ENCODE measurements at regions of chr7 and their contacts with region 1.

Region 1: GRCh38 chr7:876167-876967 is at the start of gene GET4:
- DNase-seq: peak; percentile 91
- CTCF ChIP-seq: peak; percentile 21

Region 2: GRCh38 chr7:786472-787255 is 89.7 kb before region 1 on chr7:
- CTCF ChIA-PET with region 1: interaction called, 121 read pairs
- POLR2A ChIA-PET with region 1: no interaction called
- DNase-seq: peak; percentile 88
- CTCF ChIP-seq: peak; percentile 78

Region 3: GRCh38 chr7:836411-837400 is 39.7 kb before region 1 on chr7:
- CTCF ChIA-PET with region 1: interaction called, 17 read pairs
- POLR2A ChIA-PET with region 1: no interaction called
- DNase-seq: no peak
- CTCF ChIP-seq: peak; percentile 18

Region 4: GRCh38 chr7:857661-858060 is 18.7 kb before region 1 on chr7:
- CTCF ChIA-PET with region 1: interaction called, 11 read pairs
- POLR2A ChIA-PET with region 1: no interaction called
- DNase-seq: no peak
- CTCF ChIP-seq: no peak

Region 5: DNA sequence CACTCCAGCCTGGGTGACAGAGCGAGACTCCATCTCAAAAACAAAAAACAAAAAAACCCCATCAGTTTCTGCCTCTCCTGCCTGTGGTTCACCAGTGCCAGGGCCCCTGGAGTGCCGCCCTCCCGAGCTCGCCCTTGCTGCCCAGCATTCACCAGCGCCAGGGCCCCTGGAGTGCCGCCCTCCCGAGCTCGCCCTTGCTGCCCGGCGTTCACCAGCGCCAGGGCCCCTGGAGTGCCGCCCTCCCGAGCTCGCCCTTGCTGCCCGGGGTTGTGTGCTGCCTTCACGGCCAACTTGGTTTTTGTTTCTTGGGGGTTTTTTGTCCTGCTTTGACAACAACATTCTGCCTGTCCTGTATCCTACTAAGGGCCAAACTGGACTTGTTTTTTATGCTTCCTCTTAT is 13.3 kb before region 1 on chr7:
- CTCF ChIA-PET with region 1: interaction called, 14 read pairs
- POLR2A ChIA-PET with region 1: no interaction called
- DNase-seq: no peak
- CTCF ChIP-seq: no peak